Heart right ventricle (tissue), 16 donors: ENCODE measurements at regions of chr3 and their contacts with region 1.

Region 1: DNA sequence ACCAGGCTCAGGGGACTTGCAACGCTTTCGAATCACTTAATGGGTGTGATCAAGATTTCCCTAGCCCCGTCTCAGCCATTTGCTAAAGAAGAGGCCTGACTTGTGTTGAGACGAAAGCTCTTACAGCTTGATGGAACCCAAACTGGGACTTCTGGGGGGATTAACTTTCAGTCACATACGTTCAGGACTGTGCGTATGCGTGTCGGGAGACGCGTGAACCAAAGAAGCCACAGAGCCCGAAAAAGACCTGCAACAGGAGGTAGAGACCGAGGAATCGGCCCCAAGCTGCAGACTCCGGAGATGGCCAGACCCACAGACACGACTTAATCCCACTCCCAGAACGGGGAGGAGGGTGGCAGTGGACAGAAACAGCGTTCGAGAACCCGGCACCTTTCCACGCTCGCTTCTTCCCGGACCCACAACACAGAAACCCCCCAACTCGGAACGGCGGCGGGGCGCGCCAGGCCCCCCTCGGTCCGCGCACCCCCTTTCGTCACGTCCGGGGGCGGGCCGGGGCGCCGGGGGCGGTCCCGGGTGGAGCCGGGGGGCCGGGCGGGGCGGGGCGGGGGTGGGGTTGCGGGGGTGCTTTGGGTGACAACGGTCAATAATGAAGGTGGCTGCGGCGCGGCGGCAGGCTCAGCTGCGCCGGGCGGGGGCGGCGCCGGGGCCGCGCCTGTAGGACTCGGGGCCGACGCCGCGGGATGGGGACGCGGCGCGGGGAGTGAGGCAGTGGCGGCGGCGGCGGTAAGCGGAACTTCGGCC is at the start of gene ATP11B:
- DNase-seq: peak; percentile 66 to 79
- ATAC-seq: peak; percentile 90 to 96 (median 94)
- H3K4me3 ChIP-seq: peak within 1 kb of the TSS; percentile 78 to 96 (median 88)
- H3K27ac ChIP-seq: peak within 1 kb of the TSS; percentile 90 to 97 (median 93)
- H3K4me1 ChIP-seq: peaks cover 0 to 45% (median 33%) of the 10 kb centered on the region in 9 donors
- H3K27me3 ChIP-seq: peaks cover 0 to under 1% (median 0%) of the 10 kb centered on the region in 7 donors
- CTCF ChIP-seq: peak in 1 of 9 donors; percentile 9
- total RNA-seq, gene ATP11B: 29.4 to 47.8 (median 38.1) TPM

Region 2: GRCh38 chr3:182083112-182083511 is 710.0 kb before region 1 on chr3:
- intact Hi-C with region 1: no loop called
- DNase-seq: no peak
- ATAC-seq: no peak
- H3K4me3 ChIP-seq: no peak overlapping the region
- H3K27ac ChIP-seq: no peak overlapping the region
- H3K4me1 ChIP-seq: no peaks in the 10 kb centered on the region
- H3K27me3 ChIP-seq: no peaks in the 10 kb centered on the region
- CTCF ChIP-seq: no peak

Region 3: DNA sequence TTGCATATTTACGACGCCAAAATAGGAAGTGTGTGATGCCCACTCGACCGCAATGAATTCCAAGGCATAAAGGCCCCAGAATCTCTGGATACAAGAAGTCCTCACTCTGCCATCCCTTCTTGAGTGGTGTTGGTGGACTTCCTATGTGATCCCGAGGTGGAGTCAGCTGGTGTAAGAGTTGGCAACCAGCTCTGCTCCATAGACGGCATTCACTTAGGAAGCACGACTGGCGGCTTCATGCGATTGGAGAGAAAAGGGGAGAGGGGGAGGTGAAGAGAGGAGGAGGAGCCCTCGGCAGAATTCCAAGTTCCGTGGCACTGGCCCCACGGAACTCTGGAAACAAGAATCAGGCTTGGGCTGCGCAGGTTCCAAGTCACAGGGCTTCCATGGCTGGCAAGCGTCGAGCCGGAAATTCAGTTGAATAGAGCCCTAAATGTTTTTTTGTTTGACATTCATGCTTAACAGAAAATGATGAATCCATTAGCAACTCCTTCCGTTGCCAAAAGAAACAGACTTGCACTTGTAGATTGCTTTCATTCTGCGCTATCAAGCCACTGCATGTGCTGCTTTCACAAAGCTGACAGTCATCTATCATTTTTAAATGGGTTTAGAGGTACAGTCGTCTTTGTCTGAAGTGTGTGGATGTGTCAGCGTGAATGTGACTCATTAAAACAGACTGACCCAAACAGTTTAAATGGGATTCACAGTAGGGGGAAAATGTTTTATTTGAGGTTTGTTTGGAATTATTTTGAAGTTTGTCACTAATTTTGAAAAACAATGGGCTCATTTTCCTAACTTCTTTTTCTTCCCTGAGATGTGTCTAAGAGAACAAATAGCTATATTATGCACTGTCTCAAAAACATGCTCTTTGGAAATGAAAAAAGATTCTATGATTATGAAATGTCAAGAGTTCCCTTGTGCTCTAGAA is 428.1 kb before region 1 on chr3:
- intact Hi-C with region 1: no loop called
- DNase-seq: no peak
- ATAC-seq: peak in 1 of 8 donors; percentile 16
- H3K4me3 ChIP-seq: no peak overlapping the region
- H3K27ac ChIP-seq: no peak overlapping the region
- H3K4me1 ChIP-seq: no peaks in the 10 kb centered on the region
- H3K27me3 ChIP-seq: peaks cover 0 to 6% (median 0%) of the 10 kb centered on the region in 7 donors
- CTCF ChIP-seq: no peak

Region 4: GRCh38 chr3:182713743-182714517 is 79.2 kb before region 1 on chr3:
- intact Hi-C with region 1: loop called in 1 of 10 experiments (anchors 10 kb)
- DNase-seq: no peak
- ATAC-seq: peak; percentile 61 to 90 (median 80)
- H3K4me3 ChIP-seq: no peak overlapping the region
- H3K27ac ChIP-seq: no peak overlapping the region
- H3K4me1 ChIP-seq: peaks cover 0 to 14% (median 6%) of the 10 kb centered on the region in 9 donors
- H3K27me3 ChIP-seq: no peaks in the 10 kb centered on the region
- CTCF ChIP-seq: peak; percentile 34 to 74 (median 61)

Region 5: DNA sequence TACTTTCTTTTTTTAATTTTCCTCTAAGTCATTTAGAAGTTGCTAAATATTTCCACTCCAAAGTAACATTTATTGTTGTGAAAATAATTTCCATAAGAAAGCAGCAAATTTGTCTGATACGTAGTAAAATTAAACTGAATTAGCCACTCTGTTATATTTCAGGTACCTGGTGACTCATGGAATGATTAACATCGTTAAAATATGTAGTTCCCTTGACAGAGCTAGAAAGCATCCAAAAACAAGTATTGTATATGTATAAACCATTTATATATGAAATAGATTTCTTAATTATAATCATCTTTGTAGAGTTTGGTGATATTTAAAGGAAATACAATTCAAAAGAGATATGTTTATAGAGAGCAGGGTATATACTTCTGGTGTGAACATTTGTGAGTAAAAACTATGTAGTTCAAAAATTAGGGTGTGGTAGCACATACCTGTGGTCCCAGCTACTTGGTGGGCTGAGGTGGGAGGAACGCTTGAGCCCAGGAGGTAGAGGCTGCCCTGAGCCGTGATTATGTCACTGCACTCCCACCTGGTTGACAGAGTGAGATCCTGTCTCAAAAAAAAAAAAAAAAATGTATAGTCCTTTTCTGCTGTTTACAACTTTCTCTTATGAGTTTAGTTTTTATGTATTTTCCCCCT is 36.8 kb after region 1 on chr3:
- intact Hi-C with region 1: loop called in 2 of 10 experiments (anchors 5 kb)
- DNase-seq: no peak
- ATAC-seq: no peak
- H3K4me3 ChIP-seq: no peak overlapping the region
- H3K27ac ChIP-seq: no peak overlapping the region
- H3K4me1 ChIP-seq: peaks cover 0 to 9% (median 0%) of the 10 kb centered on the region in 9 donors
- H3K27me3 ChIP-seq: no peaks in the 10 kb centered on the region
- CTCF ChIP-seq: no peak

Region 6: GRCh38 chr3:182837855-182838454 is 44.9 kb after region 1 on chr3:
- intact Hi-C with region 1: loop called in 1 of 10 experiments (anchors 5 kb)
- DNase-seq: no peak
- ATAC-seq: no peak
- H3K4me3 ChIP-seq: no peak overlapping the region
- H3K27ac ChIP-seq: no peak overlapping the region
- H3K4me1 ChIP-seq: no peaks in the 10 kb centered on the region
- H3K27me3 ChIP-seq: no peaks in the 10 kb centered on the region
- CTCF ChIP-seq: peak in 7 of 9 donors; percentile 34 to 69 (median 57)

Region 7: GRCh38 chr3:182979674-182980191 is 186.7 kb after region 1 on chr3:
- intact Hi-C with region 1: loop called in 1 of 10 experiments (anchors 5 kb)
- DNase-seq: peak in 1 of 2 donors; percentile 21
- ATAC-seq: peak; percentile 13 to 40 (median 26)
- H3K4me3 ChIP-seq: peak overlapping the region; percentile 76 to 98 (median 95)
- H3K27ac ChIP-seq: peak overlapping the region; percentile 74 to 95 (median 90)
- H3K4me1 ChIP-seq: peaks cover 0 to 26% (median 24%) of the 10 kb centered on the region in 9 donors
- H3K27me3 ChIP-seq: no peaks in the 10 kb centered on the region
- CTCF ChIP-seq: no peak